Uterus (tissue), 4 donors: ENCODE measurements at regions of chr1 and their contacts with region 1.

Region 1: DNA sequence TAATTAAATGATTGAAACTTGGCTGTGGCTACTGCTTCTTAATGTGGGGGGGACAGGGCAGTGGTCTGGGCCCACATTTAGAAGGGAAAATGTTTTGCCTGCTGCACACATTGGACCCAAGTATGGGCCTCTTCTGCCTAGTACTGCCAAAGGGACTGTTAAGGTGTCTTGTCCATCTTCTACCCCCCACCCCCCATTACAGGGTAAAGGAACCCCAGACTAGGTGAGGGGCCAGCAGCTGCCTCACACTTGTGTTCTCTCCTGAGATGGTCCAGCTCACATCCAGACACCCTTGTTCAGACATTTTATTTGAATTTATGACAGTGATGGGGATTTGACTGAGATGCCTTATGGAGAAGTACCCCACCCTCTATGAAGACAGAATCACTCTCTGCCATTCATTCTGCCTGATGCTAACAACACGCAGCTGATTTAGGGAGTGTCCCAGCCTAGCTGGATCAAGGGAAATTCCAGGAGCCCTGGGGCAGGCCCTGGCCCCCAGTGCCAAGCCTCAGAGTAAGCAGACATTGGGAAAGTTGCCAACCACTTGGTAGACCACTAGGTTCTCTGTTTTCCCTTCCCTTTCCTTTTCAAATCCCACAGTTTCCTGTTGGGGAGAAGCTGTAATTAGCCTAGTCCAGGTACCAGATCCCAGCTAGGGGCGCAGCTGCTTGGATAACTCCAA is 42.1 kb downstream of the YARS1 start:
- DNase-seq: no peak
- H3K4me3 ChIP-seq: no peak overlapping the region
- H3K27ac ChIP-seq: peak overlapping the region in 1 of 2 donors; percentile 17
- H3K4me1 ChIP-seq: no peaks in the 10 kb centered on the region
- H3K27me3 ChIP-seq: no peaks in the 10 kb centered on the region
- CTCF ChIP-seq: no peak
- POLR2A ChIP-seq: no peak

Region 2: GRCh38 chr1:32713081-32713480 is 62.0 kb before region 1 on chr1:
- intact Hi-C with region 1: loop called (anchors 2 kb)
- DNase-seq: no peak
- H3K4me3 ChIP-seq: no peak overlapping the region
- H3K27ac ChIP-seq: no peak overlapping the region
- H3K4me1 ChIP-seq: no peaks in the 10 kb centered on the region
- H3K27me3 ChIP-seq: no peaks in the 10 kb centered on the region
- CTCF ChIP-seq: no peak
- POLR2A ChIP-seq: no peak